ENCODE measurements at regions of chr19 and their contacts with region 1.

Region 1: GRCh38 chr19:34096020-34096915 is 76.0 kb upstream of the LSM14A start:
- DNase-seq: no peak
- ATAC-seq: peak; percentile 45

Region 2: GRCh38 chr19:33430674-33431277 is 665.5 kb before region 1 on chr19:
- intact Hi-C with region 1: loop called (anchors 5 kb)
- DNase-seq: peak; percentile 77
- ATAC-seq: peak; percentile 89

Region 3: GRCh38 chr19:34232566-34233481 is 136.6 kb after region 1 on chr19:
- intact Hi-C with region 1: no loop called
- DNase-seq: peak; percentile 78
- ATAC-seq: peak; percentile 57